Sigmoid colon (tissue), 7 donors: ENCODE measurements at regions of chr2 and their contacts with region 1.

Region 1: GRCh38 chr2:65432227-65433190 is at the start of gene SPRED2:
- DNase-seq: peak; percentile 98
- H3K4me3 ChIP-seq: peak within 1 kb of the TSS; percentile 69 to 91 (median 76)
- H3K27ac ChIP-seq: peak within 1 kb of the TSS; percentile 88 to 92 (median 89)
- H3K4me1 ChIP-seq: peaks cover 7 to 28% (median 17%) of the 10 kb centered on the region in 4 donors
- H3K27me3 ChIP-seq: no peaks in the 10 kb centered on the region
- CTCF ChIP-seq: no peak
- EP300 ChIP-seq: no peak
- POLR2A ChIP-seq: peak in 1 of 2 donors; percentile 44
- total RNA-seq, gene SPRED2: 6.1 to 13.7 (median 11.5) TPM

Region 2: GRCh38 chr2:64348386-64349130 is 1084.0 kb before region 1 on chr2:
- intact Hi-C with region 1: no loop called
- DNase-seq: no peak
- H3K4me3 ChIP-seq: no peak overlapping the region
- H3K27ac ChIP-seq: no peak overlapping the region
- H3K4me1 ChIP-seq: no peaks in the 10 kb centered on the region
- H3K27me3 ChIP-seq: no peaks in the 10 kb centered on the region
- CTCF ChIP-seq: no peak
- EP300 ChIP-seq: no peak
- POLR2A ChIP-seq: no peak

Region 3: GRCh38 chr2:65064728-65065552 is 367.6 kb before region 1 on chr2:
- intact Hi-C with region 1: loop called (anchors 10 kb)
- DNase-seq: peak; percentile 83
- H3K4me3 ChIP-seq: no peak overlapping the region
- H3K27ac ChIP-seq: peak overlapping the region; percentile 56 to 76 (median 63)
- H3K4me1 ChIP-seq: peaks cover 0 to 91% (median 78%) of the 10 kb centered on the region in 4 donors
- H3K27me3 ChIP-seq: no peaks in the 10 kb centered on the region
- CTCF ChIP-seq: peak; percentile 62 to 86 (median 78)
- EP300 ChIP-seq: peak in 1 of 4 donors; percentile 68
- POLR2A ChIP-seq: no peak

Region 4: GRCh38 chr2:65227425-65228262 is 204.9 kb before region 1 on chr2 and contains the start of gene ACTR2:
- intact Hi-C with region 1: loop called (anchors 2 kb)
- DNase-seq: peak; percentile 98
- H3K4me3 ChIP-seq: peak within 1 kb of the TSS; percentile 92 to 96 (median 93)
- H3K27ac ChIP-seq: peak within 1 kb of the TSS; percentile 95 to 99 (median 97)
- H3K4me1 ChIP-seq: peaks cover 0 to 55% (median 44%) of the 10 kb centered on the region in 4 donors
- H3K27me3 ChIP-seq: no peaks in the 10 kb centered on the region
- CTCF ChIP-seq: no peak
- EP300 ChIP-seq: no peak
- POLR2A ChIP-seq: peak; percentile 66 to 82
- total RNA-seq, gene ACTR2: 70.9 to 98.1 (median 88.1) TPM

Region 5: GRCh38 chr2:65264821-65265670 is 167.5 kb before region 1 on chr2:
- intact Hi-C with region 1: loop called (anchors 2 kb)
- DNase-seq: no peak
- H3K4me3 ChIP-seq: no peak overlapping the region
- H3K27ac ChIP-seq: no peak overlapping the region
- H3K4me1 ChIP-seq: peaks cover 0 to 3% (median 0%) of the 10 kb centered on the region in 4 donors
- H3K27me3 ChIP-seq: no peaks in the 10 kb centered on the region
- CTCF ChIP-seq: peak; percentile 39 to 76 (median 64)
- EP300 ChIP-seq: no peak
- POLR2A ChIP-seq: no peak

Region 6: GRCh38 chr2:65349863-65350262 is 82.6 kb before region 1 on chr2:
- intact Hi-C with region 1: no loop called
- DNase-seq: peak; percentile 79
- H3K4me3 ChIP-seq: no peak overlapping the region
- H3K27ac ChIP-seq: peak overlapping the region in 1 of 4 donors; percentile 6
- H3K4me1 ChIP-seq: peaks cover 0 to 18% (median 14%) of the 10 kb centered on the region in 4 donors
- H3K27me3 ChIP-seq: no peaks in the 10 kb centered on the region
- CTCF ChIP-seq: no peak
- EP300 ChIP-seq: no peak
- POLR2A ChIP-seq: no peak

Region 7: GRCh38 chr2:65479524-65479923 is 47.0 kb after region 1 on chr2:
- intact Hi-C with region 1: no loop called
- DNase-seq: no peak
- H3K4me3 ChIP-seq: no peak overlapping the region
- H3K27ac ChIP-seq: no peak overlapping the region
- H3K4me1 ChIP-seq: no peaks in the 10 kb centered on the region
- H3K27me3 ChIP-seq: no peaks in the 10 kb centered on the region
- CTCF ChIP-seq: no peak
- EP300 ChIP-seq: no peak
- POLR2A ChIP-seq: no peak

Region 8: GRCh38 chr2:65554765-65555591 is 122.5 kb after region 1 on chr2:
- intact Hi-C with region 1: loop called (anchors 5 kb)
- DNase-seq: no peak
- H3K4me3 ChIP-seq: no peak overlapping the region
- H3K27ac ChIP-seq: no peak overlapping the region
- H3K4me1 ChIP-seq: peaks cover 0 to 8% (median 2%) of the 10 kb centered on the region in 4 donors
- H3K27me3 ChIP-seq: no peaks in the 10 kb centered on the region
- CTCF ChIP-seq: no peak
- EP300 ChIP-seq: no peak
- POLR2A ChIP-seq: no peak